CD14-positive monocyte (primary cell): ENCODE measurements at regions of chr17 and their contacts with region 1.

Region 1: DNA sequence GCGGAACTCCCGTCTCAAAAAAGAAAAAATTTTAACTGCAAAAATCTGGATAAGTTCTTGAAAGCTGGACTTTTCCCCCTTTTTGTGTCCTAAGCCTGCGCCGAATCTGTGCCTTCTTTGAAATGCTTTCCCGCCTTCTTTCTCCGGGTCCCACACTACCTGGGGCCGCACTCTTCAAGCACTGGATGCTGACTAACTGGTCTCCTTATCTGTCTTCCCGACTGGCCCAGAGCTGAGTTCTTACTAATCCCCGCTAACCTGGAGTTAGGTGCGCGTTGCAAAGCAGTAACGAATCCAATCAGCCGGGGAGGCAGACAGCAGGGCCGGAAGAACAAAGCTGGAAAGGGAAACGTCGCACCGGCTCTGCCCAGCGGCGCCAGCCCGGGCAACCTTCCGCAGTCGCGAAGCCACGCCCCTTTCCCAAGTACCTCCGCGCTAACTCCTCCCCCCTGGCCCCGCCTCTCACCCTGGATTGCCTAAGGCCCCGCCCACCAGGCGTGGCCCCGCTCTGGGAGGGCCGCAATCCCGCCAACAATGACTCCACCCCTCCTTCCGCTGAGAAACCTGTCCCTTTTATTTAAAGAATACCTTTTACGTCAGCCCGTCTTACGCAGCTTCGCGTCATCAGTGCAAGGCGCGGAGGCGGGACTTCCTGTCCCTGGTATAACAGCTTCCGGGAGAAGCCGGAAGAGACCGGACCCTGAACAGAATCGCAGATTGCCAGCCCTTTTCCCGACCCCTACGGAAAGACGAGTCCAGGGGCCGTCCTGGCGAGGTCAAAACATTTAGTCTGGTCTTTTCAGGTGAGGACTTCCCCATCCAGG is at the start of gene TMUB2:
- DNase-seq: peak; percentile 99
- H3K4me3 ChIP-seq: peak within 1 kb of the TSS; percentile 75 to 94 (median 90)
- H3K4me3 Mint-ChIP-seq: peak within 1 kb of the TSS; percentile 97 to 99
- H3K27ac ChIP-seq: peak within 1 kb of the TSS; percentile 92 to 98
- H3K27ac Mint-ChIP-seq: peak within 1 kb of the TSS; percentile 96 to 100 (median 99)
- H3K4me1 ChIP-seq: peaks cover 33 to 39% of the 10 kb centered on the region in 2 donors
- H3K4me1 Mint-ChIP-seq: peaks cover 36% of the 10 kb centered on the region
- H3K27me3 ChIP-seq: no peaks in the 10 kb centered on the region
- H3K27me3 Mint-ChIP-seq: no peaks in the 10 kb centered on the region
- CTCF ChIP-seq: no peak
- polyA plus RNA-seq, gene TMUB2: 41.3 to 118 (median 41.7) TPM

Region 2: DNA sequence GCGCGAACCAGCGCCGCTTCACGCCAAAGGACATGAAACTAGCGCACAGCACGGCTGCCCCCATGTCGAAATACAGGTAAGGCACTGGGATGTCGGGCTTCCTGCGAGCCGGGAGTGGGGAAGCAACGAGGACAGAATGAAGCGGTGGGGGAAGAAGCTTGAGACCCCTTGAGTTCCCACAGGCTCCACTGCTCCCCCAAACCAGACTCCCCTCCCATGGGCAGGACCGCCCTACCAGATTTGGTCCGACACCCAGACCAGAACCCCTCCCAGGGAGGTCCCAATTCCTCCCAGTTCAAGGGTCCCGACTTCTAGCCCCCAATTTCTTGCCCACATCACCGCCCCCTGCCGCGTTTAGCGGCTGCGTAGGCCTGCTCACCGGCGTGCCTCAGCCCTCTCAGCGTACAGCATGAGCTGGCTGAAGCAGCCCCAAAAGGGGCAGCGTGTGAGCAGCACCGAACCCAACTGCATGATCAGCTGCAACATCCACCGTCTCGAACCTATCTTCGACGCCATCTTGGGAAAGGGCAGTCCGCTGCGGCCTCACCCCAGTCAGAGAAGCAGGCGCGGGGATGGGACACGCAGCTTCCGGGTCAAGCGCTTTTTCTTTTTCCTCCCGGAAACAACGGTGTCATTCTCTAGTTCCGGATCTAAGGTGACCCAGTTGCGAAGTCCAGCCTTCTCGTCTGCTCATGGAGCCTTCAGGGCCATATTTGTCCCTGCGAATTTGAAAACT is 171.9 kb before region 1 on chr17 and contains the start of gene TMEM101:
- intact Hi-C with region 1: loop called in 1 of 2 experiments (anchors 2 kb)
- DNase-seq: peak; percentile 91 to 93 (median 93)
- H3K4me3 ChIP-seq: peak within 1 kb of the TSS; percentile 63 to 98 (median 87)
- H3K4me3 Mint-ChIP-seq: peak within 1 kb of the TSS; percentile 97 to 100
- H3K27ac ChIP-seq: peak within 1 kb of the TSS in 1 of 2 donors; percentile 91
- H3K27ac Mint-ChIP-seq: peak within 1 kb of the TSS; percentile 82 to 97 (median 91)
- H3K4me1 ChIP-seq: peaks cover 12 to 17% of the 10 kb centered on the region in 2 donors
- H3K4me1 Mint-ChIP-seq: peaks cover 23% of the 10 kb centered on the region
- H3K27me3 ChIP-seq: no peaks in the 10 kb centered on the region
- H3K27me3 Mint-ChIP-seq: peaks cover 0 to 2% (median 0%) of the 10 kb centered on the region in 3 donors
- CTCF ChIP-seq: no peak
- polyA plus RNA-seq, gene TMEM101: 17.3 to 41.4 (median 33.6) TPM

Region 3: GRCh38 chr17:44070455-44071197 is 115.9 kb before region 1 on chr17 and contains the start of gene G6PC3:
- intact Hi-C with region 1: loop called in 1 of 2 experiments (anchors 10 kb)
- DNase-seq: peak; percentile 87 to 92 (median 89)
- H3K4me3 ChIP-seq: peak within 1 kb of the TSS; percentile 45 to 84 (median 65)
- H3K4me3 Mint-ChIP-seq: peak within 1 kb of the TSS; percentile 89 to 94
- H3K27ac ChIP-seq: peak within 1 kb of the TSS; percentile 86
- H3K27ac Mint-ChIP-seq: peak within 1 kb of the TSS; percentile 87 to 97 (median 94)
- H3K4me1 ChIP-seq: peaks cover 46 to 56% of the 10 kb centered on the region in 2 donors
- H3K4me1 Mint-ChIP-seq: peaks cover 49% of the 10 kb centered on the region
- H3K27me3 ChIP-seq: no peaks in the 10 kb centered on the region
- H3K27me3 Mint-ChIP-seq: peaks cover 0 to 1% (median 0%) of the 10 kb centered on the region in 3 donors
- CTCF ChIP-seq: no peak
- polyA plus RNA-seq, gene G6PC3: 38.0 to 46.4 (median 42.4) TPM

Region 4: DNA sequence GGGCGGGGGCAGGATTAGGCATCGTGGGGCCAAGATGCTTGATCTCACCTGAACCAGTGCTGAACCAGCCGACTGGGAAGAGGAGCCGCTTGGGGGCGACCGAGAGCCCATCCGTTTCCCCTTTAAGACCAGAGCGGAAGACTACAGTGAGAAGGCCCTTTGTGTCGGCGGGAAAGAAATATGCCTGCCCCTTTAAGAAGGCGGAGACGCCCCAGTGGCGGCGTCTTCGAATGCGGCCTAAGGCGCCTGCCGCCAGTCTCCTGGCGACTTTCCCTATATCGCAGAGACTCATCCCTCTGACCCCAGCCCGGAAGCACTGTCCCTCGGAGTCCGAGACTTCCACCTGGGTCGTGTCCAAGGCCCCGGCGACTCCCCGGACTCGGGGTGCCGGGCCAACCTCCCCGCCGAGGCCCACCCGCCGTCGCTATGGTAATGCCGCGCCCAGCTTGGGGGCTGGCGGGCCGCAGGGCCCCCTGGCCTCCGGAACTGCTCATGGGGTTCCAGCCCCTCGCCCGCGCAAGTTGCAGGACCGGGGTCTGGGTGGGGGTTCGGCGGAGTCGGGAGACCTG is 44.7 kb before region 1 on chr17 and contains the start of gene HROB:
- intact Hi-C with region 1: loop called (anchors 5 kb)
- DNase-seq: peak; percentile 93 to 96 (median 96)
- H3K4me3 ChIP-seq: peak within 1 kb of the TSS; percentile 42 to 92 (median 60)
- H3K4me3 Mint-ChIP-seq: peak within 1 kb of the TSS; percentile 79 to 85
- H3K27ac ChIP-seq: peak within 1 kb of the TSS in 1 of 2 donors; percentile 81
- H3K27ac Mint-ChIP-seq: peak within 1 kb of the TSS; percentile 70 to 92 (median 84)
- H3K4me1 ChIP-seq: peaks cover 12 to 23% of the 10 kb centered on the region in 2 donors
- H3K4me1 Mint-ChIP-seq: peaks cover 27% of the 10 kb centered on the region
- H3K27me3 ChIP-seq: no peaks in the 10 kb centered on the region
- H3K27me3 Mint-ChIP-seq: peaks cover 4 to 5% (median 5%) of the 10 kb centered on the region in 3 donors
- CTCF ChIP-seq: peak; percentile 92
- polyA plus RNA-seq, gene HROB: 0.17 to 0.32 (median 0.20) TPM

Region 5: DNA sequence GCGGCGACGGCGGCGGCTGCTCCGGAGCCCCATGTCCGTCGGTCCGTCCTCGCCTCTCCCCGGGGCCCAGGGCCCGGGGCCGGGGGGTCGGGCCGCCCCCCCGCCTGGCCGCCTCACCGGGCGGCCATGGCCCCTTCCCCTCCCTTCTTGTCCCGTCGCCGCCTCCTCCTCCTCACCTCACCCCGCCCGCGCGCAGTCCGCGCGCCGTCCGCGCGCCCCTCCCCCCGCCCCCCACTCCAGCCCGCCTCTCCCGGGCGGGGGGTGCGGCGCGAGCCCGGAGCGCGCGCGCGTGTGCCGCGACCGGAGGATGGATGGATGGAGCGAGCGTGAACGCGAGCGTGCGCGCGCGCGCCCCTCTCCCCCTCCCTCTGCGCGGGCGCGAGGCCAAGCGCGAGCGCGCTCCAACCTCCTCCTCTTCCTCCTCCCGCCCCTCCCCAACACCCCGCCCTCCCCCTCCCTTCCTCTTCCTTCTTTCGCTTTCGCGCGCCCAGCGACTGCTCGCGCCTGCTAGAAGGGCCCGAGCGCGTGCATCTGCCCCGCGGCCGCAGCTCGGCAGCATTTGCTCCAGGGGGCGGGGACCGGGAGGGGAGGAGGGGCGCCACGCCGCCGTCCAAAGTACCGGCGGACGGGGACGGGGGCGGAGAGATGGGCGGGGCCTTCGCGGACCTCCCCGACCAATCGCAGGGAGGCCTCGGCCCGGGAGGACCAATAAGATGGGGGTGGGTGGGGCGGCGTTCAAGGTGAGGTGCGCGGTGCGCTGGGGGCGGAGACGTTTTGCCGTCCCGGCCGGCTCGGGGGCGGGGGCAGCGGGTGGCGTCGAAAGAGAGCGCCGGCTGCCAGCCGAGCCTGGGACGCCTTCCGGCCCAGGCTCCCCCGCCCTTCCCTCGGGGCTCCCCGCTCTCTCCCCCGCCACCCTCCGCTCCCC is 13.3 kb after region 1 on chr17 and contains the start of gene ATXN7L3:
- intact Hi-C with region 1: loop called (anchors 1 kb)
- DNase-seq: peak; percentile 94 to 98 (median 96)
- H3K4me3 ChIP-seq: peak within 1 kb of the TSS; percentile 94 to 97 (median 97)
- H3K4me3 Mint-ChIP-seq: peak within 1 kb of the TSS; percentile 91 to 92
- H3K27ac ChIP-seq: peak within 1 kb of the TSS; percentile 94
- H3K27ac Mint-ChIP-seq: peak within 1 kb of the TSS; percentile 92 to 98 (median 95)
- H3K4me1 ChIP-seq: peaks cover 48 to 51% of the 10 kb centered on the region in 2 donors
- H3K4me1 Mint-ChIP-seq: peaks cover 53% of the 10 kb centered on the region
- H3K27me3 ChIP-seq: no peaks in the 10 kb centered on the region
- H3K27me3 Mint-ChIP-seq: peaks cover 0 to 2% (median 0%) of the 10 kb centered on the region in 3 donors
- CTCF ChIP-seq: no peak
- polyA plus RNA-seq, gene ATXN7L3: 8.5 to 60.9 (median 9.9) TPM

Region 6: DNA sequence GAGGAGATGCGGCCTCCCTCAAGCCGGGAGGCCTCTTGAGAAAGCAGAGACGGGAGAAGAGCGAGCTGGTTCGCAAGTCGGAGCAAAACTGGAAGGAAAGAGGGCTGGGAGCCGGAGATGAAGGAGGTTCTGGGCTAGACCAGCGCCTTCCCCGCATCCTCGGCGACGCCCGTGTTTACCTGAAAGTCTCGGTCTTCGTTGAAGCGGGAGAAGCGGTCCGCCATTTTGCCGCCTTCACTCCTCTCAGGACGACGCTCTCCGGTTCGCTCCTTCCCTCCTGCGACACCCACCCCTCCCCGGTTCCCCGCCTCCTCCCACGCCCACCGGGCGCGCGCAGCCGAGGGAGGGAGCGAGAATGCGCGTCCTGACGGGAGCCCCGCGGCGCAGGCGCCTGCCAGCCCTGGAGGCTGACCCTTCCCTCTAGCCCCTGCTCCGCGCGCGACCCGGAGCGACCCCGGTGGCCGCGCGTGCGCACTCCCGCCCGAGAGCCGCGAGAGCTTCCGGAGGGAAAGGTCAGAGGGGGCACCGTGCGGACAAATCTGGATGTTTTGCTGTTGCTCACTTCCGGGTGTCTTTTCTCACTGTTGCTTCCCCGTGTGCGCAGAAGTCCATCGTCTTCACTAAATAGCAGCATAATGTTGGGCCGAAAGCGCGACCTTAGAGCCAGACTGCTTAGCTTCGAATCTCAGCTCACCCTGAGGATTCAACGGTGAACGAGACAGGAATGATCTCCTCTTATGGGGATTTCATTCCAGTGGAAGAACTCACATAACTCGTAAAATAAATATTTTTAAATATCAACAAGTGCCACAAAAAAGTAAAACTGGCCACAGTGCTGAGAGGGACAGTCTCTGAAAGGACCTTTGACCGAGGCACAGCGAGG is 316.9 kb after region 1 on chr17 and contains the start of gene GPATCH8:
- intact Hi-C with region 1: loop called in 1 of 2 experiments (anchors 5 kb)
- DNase-seq: peak; percentile 92 to 96 (median 95)
- H3K4me3 ChIP-seq: peak within 1 kb of the TSS; percentile 61 to 93 (median 84)
- H3K4me3 Mint-ChIP-seq: peak within 1 kb of the TSS; percentile 98 to 99
- H3K27ac ChIP-seq: peak within 1 kb of the TSS; percentile 86 to 90
- H3K27ac Mint-ChIP-seq: peak within 1 kb of the TSS; percentile 94 to 99 (median 98)
- H3K4me1 ChIP-seq: peaks cover 22 to 38% of the 10 kb centered on the region in 2 donors
- H3K4me1 Mint-ChIP-seq: peaks cover 37% of the 10 kb centered on the region
- H3K27me3 ChIP-seq: no peaks in the 10 kb centered on the region
- H3K27me3 Mint-ChIP-seq: peaks cover 0 to 2% (median 0%) of the 10 kb centered on the region in 3 donors
- CTCF ChIP-seq: no peak
- polyA plus RNA-seq, gene GPATCH8: 8.8 to 15.9 (median 14.9) TPM